ENCODE measurements at regions of chr7 and their contacts with region 1.

Region 1: GRCh38 chr7:102279537-102280400 is 6.9 kb upstream of the SH2B2 start:
- DNase-seq: peak; percentile 77

Region 2: DNA sequence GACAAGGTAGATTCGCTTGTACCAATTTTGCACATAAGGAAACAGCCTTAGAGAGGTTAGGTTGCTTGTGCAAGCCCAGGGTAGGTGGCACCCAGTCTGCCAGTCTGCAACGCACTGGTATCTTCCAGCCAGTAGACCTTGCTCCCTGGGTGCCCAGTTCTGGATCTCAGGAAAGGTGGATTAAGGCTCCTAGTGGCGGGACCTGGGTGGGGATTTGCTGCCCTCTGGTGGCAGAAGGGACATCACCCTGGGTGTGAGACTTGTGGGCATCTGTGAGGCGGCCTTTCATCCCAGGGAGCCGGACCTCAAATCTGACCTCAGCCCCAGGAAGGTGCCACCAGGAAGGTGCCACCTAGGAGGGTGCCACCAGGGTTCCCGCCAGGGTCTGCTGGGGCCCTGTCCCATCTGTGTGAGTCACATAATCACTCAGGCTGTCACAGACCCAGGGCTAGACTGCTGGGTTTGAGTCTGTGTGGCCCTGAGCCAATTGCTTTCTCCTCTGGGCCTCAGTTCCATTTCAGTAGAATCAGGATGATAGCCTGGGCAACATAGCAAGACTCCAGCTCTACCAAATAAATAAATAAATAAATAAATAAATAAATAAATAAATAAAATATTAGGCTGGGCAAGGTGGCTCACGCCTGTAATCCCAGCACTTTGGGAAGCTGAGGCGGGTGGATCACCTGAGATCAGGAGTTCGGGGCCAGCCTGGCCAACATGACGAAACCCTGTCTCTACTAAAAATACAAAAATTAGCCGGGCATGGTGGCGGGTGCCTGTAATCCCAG is 111.1 kb after region 1 on chr7:
- in situ Hi-C with region 1: loop called (anchors 5 kb)
- DNase-seq: peak; percentile 78